ENCODE measurements at regions of chr12 and their contacts with region 1.

Region 1: DNA sequence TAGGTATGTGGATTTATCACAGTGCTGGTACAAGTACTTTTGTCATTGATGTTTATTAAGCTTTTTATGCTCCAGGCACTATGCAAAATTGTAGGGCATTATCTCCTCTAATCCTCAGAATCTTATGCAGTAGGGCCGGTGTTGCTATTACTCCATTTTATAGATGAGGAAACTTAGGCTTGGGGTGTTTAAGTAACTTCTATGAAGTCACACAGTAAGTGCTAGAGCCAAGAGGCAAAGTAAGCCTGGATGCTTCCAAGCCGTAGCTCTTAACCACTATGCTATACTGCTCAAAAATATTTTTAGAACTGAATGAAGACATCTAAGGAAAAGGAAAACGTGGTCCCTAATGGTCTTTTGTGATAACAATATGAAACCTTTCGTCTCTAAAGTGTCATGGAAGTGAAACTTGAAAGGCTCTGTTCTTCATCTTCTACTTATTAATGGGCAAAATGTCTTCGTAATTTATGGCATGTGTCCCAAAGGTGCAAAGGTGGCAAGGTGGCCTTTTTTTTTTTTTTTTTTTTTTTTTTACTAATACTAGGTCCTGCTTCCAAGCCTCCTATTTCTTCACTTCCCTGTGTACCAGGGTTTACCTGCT is 85.2 kb downstream of the ETV6 start:
- DNase-seq: no peak
- H3K4me3 ChIP-seq: no peak overlapping the region
- H3K27ac ChIP-seq: no peak overlapping the region
- H3K4me1 ChIP-seq: peaks cover 13% of the 10 kb centered on the region
- H3K27me3 ChIP-seq: no peaks in the 10 kb centered on the region
- CTCF ChIP-seq: no peak

Region 2: GRCh38 chr12:11581179-11581755 is 153.4 kb before region 1 on chr12:
- CTCF ChIA-PET with region 1: no interaction called
- POLR2A ChIA-PET with region 1: no interaction called
- intact Hi-C with region 1: no loop called
- DNase-seq: peak; percentile 90
- H3K4me3 ChIP-seq: no peak overlapping the region
- H3K27ac ChIP-seq: no peak overlapping the region
- H3K4me1 ChIP-seq: peaks cover 28% of the 10 kb centered on the region
- H3K27me3 ChIP-seq: no peaks in the 10 kb centered on the region
- CTCF ChIP-seq: peak; percentile 62

Region 3: DNA sequence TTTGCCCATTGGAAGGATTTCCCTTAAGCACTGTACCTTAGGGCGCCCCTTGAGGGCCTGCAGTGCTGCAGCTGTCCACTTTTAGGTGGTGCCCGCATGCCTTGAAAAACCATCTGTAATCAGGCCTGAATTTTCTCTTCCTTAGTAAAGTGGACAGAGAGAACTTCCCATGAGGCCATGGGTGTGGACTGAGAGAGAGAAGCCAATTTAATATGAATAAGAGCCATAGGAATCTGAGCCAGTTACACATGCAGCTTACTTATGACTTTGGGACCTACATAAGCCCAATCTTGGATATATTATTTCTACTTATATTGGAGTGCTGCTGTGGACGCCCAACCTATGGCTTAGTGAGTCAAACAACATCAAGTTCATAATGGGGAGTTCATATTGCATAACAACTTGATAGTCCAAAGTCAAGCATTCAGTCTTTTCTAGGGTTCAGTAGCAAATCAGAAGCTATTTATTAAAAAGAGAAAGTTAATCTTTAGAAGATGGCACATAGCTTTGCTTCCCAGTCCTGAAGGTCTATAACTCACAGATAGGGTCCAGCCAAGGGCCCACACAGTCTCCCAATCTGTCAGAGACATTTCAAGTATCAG is 96.3 kb before region 1 on chr12:
- CTCF ChIA-PET with region 1: no interaction called
- POLR2A ChIA-PET with region 1: no interaction called
- intact Hi-C with region 1: no loop called
- DNase-seq: no peak
- H3K4me3 ChIP-seq: no peak overlapping the region
- H3K27ac ChIP-seq: no peak overlapping the region
- H3K4me1 ChIP-seq: no peaks in the 10 kb centered on the region
- H3K27me3 ChIP-seq: no peaks in the 10 kb centered on the region
- CTCF ChIP-seq: no peak

Region 4: GRCh38 chr12:11713202-11713601 is 21.5 kb before region 1 on chr12:
- CTCF ChIA-PET with region 1: no interaction called
- POLR2A ChIA-PET with region 1: interaction called, 10 read pairs
- intact Hi-C with region 1: no loop called
- DNase-seq: no peak
- H3K4me3 ChIP-seq: no peak overlapping the region
- H3K27ac ChIP-seq: no peak overlapping the region
- H3K4me1 ChIP-seq: peaks cover 31% of the 10 kb centered on the region
- H3K27me3 ChIP-seq: no peaks in the 10 kb centered on the region
- CTCF ChIP-seq: no peak